Endothelial cell of umbilical vein (primary cell): ENCODE measurements at regions of chr10 and their contacts with region 1.

Region 1: DNA sequence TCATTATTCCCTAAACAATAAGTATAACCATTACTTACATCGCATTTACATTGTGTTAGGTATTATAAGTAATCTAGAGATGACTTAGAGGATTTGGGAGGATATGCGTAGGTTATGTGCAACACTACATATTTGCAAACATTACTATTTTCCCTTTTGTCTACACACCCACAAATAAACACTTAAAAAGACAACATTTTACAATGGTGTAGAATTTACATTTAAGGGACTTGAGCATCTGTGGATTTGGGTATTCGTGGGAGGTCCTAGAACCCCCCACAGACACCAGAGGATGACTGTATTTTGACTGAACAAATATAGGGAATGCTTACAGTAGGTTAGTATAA is 220.2 kb upstream of the MYO3A start:
- DNase-seq: no peak
- H3K4me3 ChIP-seq: no peak overlapping the region
- H3K27ac ChIP-seq: no peak overlapping the region
- H3K4me1 ChIP-seq: no peaks in the 10 kb centered on the region
- H3K27me3 ChIP-seq: no peaks in the 10 kb centered on the region
- CTCF ChIP-seq: no peak
- POLR2A ChIP-seq: no peak

Region 2: DNA sequence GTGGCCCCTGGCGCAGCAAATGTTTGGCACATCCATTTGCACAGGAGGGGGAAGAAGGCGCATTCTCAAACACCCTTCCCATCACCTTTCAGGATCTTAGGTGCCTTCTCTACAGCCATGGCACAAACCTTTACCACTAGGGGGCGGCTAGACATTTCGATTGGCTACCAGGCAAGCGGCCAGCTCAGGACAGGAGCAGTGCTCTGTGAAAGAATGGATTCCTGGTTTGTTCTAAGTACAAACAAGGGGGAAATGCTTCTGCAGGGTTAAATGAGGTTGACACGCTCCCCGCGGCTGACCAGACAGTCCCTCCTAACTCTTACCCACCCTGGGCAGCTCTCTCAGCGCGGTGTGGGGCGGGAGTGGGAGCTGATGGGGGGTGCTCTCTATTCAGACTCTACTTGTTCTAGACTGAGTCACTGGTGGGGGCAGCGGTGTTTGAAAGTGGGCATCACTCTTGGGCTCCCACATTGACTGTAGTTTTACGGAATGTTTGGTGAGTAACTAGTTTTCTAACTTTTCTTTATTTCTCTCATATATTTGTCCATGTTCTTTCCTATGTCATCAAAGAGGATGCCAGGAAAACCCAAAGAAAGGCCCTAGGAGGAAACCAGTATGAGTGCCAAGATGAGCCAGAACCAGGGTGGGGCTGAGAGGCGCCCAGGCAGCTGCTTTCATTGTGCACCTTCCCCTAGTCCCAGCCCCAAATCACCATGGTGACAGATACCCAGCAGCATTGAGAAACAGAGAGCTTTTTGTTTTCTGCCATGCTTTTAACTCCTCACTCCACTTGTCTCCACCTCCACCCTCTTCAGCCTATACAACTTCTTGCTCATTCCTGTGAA is 600.5 kb before region 1 on chr10:
- CTCF ChIA-PET with region 1: interaction called, 50 read pairs
- POLR2A ChIA-PET with region 1: no interaction called
- dilution Hi-C with region 1: no loop called
- intact Hi-C with region 1: loop called (anchors 1 kb)
- DNase-seq: peak; percentile 64
- H3K4me3 ChIP-seq: no peak overlapping the region
- H3K27ac ChIP-seq: no peak overlapping the region
- H3K4me1 ChIP-seq: no peaks in the 10 kb centered on the region
- H3K27me3 ChIP-seq: peaks cover 0 to 4% of the 10 kb centered on the region in 2 experiments
- CTCF ChIP-seq: peak; percentile 82 to 86
- POLR2A ChIP-seq: no peak

Region 3: DNA sequence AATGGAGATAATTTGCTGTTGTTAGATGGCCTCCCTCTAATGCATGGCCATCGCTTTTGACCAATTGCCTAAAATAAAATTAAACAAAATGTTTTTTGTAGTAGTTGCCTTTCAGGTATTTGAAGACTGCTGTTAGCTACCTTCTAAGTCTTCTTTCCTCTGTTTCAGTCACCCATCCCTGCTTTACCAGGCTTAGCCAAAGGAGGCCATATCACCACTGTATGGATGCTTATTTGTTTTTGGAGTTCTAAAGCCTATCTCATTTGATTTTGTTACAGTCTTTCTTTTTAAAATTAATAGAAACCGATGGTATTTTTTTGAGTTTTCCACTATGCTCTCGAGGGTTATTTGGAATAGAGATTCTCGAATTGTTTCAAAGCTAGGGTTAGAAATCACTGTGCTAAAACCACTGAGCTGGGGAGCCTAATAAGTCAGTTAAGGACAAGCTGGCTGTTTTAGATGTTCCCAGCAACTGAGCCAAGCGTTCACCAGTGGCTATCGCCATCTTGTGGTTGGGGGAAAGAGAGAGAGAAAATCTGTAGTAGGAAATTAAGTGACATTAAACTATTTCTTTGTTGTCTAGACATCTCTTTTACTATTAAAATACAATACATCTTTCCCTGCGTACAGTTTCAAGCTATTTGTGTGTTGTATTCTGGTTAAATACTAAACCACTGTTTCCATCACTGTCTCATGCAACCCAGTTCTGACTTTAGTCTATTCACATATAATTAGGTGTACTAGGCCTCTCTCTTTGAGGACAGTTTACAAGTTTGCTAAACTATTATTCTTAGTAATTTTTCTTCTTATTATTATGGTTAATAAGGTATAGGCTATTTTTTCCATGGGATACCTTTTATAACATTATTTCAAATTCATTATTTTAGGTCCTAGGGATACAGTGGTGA is 486.8 kb before region 1 on chr10:
- CTCF ChIA-PET with region 1: interaction called, 8 read pairs
- POLR2A ChIA-PET with region 1: no interaction called
- dilution Hi-C with region 1: no loop called
- intact Hi-C with region 1: loop called (anchors 10 kb)
- DNase-seq: peak; percentile 42
- H3K4me3 ChIP-seq: no peak overlapping the region
- H3K27ac ChIP-seq: no peak overlapping the region
- H3K4me1 ChIP-seq: no peaks in the 10 kb centered on the region
- H3K27me3 ChIP-seq: no peaks in the 10 kb centered on the region
- CTCF ChIP-seq: peak; percentile 56
- POLR2A ChIP-seq: no peak

Region 4: GRCh38 chr10:25522946-25523608 is 190.8 kb before region 1 on chr10:
- CTCF ChIA-PET with region 1: interaction called, 13 read pairs
- POLR2A ChIA-PET with region 1: no interaction called
- dilution Hi-C with region 1: no loop called
- intact Hi-C with region 1: loop called (anchors 2 kb)
- DNase-seq: peak; percentile 57
- H3K4me3 ChIP-seq: no peak overlapping the region
- H3K27ac ChIP-seq: no peak overlapping the region
- H3K4me1 ChIP-seq: no peaks in the 10 kb centered on the region
- H3K27me3 ChIP-seq: no peaks in the 10 kb centered on the region
- CTCF ChIP-seq: peak; percentile 44 to 51
- POLR2A ChIP-seq: no peak

Region 5: DNA sequence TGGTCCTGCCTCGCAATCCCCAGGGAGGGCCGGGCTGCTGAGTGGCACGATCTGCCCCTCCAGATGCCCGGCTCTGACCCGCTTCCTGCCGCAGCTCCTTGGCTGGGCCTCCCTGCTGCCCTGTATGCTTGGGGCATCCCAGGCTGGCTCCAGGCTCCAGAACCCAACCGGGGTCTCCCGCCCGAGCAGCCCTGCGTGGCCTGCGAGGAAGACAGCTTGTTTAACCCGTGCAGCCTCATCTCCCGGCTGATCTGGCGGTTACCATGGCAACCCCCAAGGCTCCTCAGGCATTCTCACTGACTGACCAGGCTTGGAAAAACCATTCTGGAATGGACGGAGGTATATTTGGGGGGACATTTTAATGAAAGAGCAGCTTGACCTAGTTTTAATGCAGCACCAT is 12.2 kb before region 1 on chr10:
- CTCF ChIA-PET with region 1: interaction called, 32 read pairs
- POLR2A ChIA-PET with region 1: no interaction called
- dilution Hi-C with region 1: no loop called
- intact Hi-C with region 1: no loop called
- DNase-seq: no peak
- H3K4me3 ChIP-seq: no peak overlapping the region
- H3K27ac ChIP-seq: no peak overlapping the region
- H3K4me1 ChIP-seq: no peaks in the 10 kb centered on the region
- H3K27me3 ChIP-seq: no peaks in the 10 kb centered on the region
- CTCF ChIP-seq: no peak
- POLR2A ChIP-seq: no peak

Region 6: GRCh38 chr10:25753776-25754175 is 39.9 kb after region 1 on chr10:
- CTCF ChIA-PET with region 1: no interaction called
- POLR2A ChIA-PET with region 1: no interaction called
- dilution Hi-C with region 1: no loop called
- intact Hi-C with region 1: no loop called
- DNase-seq: no peak
- H3K4me3 ChIP-seq: no peak overlapping the region
- H3K27ac ChIP-seq: no peak overlapping the region
- H3K4me1 ChIP-seq: no peaks in the 10 kb centered on the region
- H3K27me3 ChIP-seq: no peaks in the 10 kb centered on the region
- CTCF ChIP-seq: no peak
- POLR2A ChIP-seq: no peak